MCF 10A (cell line): ENCODE measurements at regions of chr9 and their contacts with region 1.

Region 1: GRCh38 chr9:112112941-112113681 is 62.0 kb downstream of the SUSD1 start:
- DNase-seq: peak; percentile 76
- H3K4me3 Mint-ChIP-seq: no peak overlapping the region
- H3K27ac Mint-ChIP-seq: peak overlapping the region; percentile 78
- H3K4me1 Mint-ChIP-seq: peaks cover 23% of the 10 kb centered on the region
- H3K27me3 Mint-ChIP-seq: no peaks in the 10 kb centered on the region
- CTCF ChIP-seq: peak; percentile 85

Region 2: DNA sequence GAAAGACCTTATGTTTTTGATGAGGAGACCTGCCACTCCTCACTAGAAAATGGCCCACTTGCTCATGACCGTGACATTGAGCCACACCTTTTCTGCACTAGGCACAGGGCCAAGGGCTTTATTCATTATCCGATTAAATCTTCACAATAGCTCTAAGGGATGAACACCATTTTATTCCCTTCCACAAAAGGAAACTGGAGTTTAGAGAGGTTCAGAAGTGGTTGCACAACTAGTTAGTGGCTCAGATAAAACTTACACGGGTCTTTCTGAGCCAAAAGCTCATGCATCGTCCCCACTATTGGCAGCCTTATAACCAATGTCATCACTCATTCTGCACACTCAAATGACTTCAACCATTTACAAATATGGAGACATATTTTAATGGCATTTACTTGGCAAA is 22.6 kb after region 1 on chr9:
- CTCF ChIA-PET with region 1: interaction called, 18 read pairs
- POLR2A ChIA-PET with region 1: interaction called, 4 read pairs
- intact Hi-C with region 1: no loop called
- DNase-seq: peak; percentile 21
- H3K4me3 Mint-ChIP-seq: no peak overlapping the region
- H3K27ac Mint-ChIP-seq: no peak overlapping the region
- H3K4me1 Mint-ChIP-seq: peaks cover 6% of the 10 kb centered on the region
- H3K27me3 Mint-ChIP-seq: no peaks in the 10 kb centered on the region
- CTCF ChIP-seq: no peak

Region 3: GRCh38 chr9:112333639-112334431 is 220.7 kb after region 1 on chr9:
- CTCF ChIA-PET with region 1: interaction called, 23 read pairs
- POLR2A ChIA-PET with region 1: interaction called, 34 read pairs
- intact Hi-C with region 1: loop called (anchors 1 kb)
- DNase-seq: peak; percentile 94
- H3K4me3 Mint-ChIP-seq: peak overlapping the region; percentile 94
- H3K27ac Mint-ChIP-seq: peak overlapping the region; percentile 94
- H3K4me1 Mint-ChIP-seq: peaks cover 13% of the 10 kb centered on the region
- H3K27me3 Mint-ChIP-seq: no peaks in the 10 kb centered on the region
- CTCF ChIP-seq: peak; percentile 35

Region 4: DNA sequence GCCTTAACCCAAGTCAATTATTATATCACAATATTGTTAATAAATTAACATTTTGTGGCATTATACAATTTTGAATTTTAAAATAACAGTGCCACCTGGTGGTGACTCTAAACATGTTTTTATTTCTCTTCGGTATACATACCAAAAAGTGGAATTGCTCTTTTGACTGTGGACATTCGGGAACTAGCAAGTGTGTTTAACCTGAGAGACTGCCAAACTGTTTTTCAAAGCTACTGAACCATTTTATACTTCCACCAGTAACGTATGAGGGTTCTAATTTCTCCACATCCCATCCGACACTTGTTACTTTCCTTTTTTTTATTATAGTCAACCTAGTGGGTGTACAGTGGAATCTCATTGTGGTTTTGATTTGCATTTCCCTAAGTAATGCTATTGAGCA is 248.5 kb after region 1 on chr9:
- CTCF ChIA-PET with region 1: interaction called, 110 read pairs
- POLR2A ChIA-PET with region 1: interaction called, 33 read pairs
- intact Hi-C with region 1: loop called (anchors 1 kb)
- DNase-seq: peak; percentile 48
- H3K4me3 Mint-ChIP-seq: no peak overlapping the region
- H3K27ac Mint-ChIP-seq: no peak overlapping the region
- H3K4me1 Mint-ChIP-seq: peaks cover 5% of the 10 kb centered on the region
- H3K27me3 Mint-ChIP-seq: no peaks in the 10 kb centered on the region
- CTCF ChIP-seq: peak; percentile 34

Region 5: GRCh38 chr9:112711050-112711689 is 598.1 kb after region 1 on chr9:
- CTCF ChIA-PET with region 1: interaction called, 3 read pairs
- POLR2A ChIA-PET with region 1: no interaction called
- intact Hi-C with region 1: loop called (anchors 5 kb)
- DNase-seq: peak; percentile 38
- H3K4me3 Mint-ChIP-seq: no peak overlapping the region
- H3K27ac Mint-ChIP-seq: no peak overlapping the region
- H3K4me1 Mint-ChIP-seq: peaks cover 17% of the 10 kb centered on the region
- H3K27me3 Mint-ChIP-seq: no peaks in the 10 kb centered on the region
- CTCF ChIP-seq: peak; percentile 40